GM12878 (cell line): ENCODE measurements at regions of chrX and their contacts with region 1.

Region 1: DNA sequence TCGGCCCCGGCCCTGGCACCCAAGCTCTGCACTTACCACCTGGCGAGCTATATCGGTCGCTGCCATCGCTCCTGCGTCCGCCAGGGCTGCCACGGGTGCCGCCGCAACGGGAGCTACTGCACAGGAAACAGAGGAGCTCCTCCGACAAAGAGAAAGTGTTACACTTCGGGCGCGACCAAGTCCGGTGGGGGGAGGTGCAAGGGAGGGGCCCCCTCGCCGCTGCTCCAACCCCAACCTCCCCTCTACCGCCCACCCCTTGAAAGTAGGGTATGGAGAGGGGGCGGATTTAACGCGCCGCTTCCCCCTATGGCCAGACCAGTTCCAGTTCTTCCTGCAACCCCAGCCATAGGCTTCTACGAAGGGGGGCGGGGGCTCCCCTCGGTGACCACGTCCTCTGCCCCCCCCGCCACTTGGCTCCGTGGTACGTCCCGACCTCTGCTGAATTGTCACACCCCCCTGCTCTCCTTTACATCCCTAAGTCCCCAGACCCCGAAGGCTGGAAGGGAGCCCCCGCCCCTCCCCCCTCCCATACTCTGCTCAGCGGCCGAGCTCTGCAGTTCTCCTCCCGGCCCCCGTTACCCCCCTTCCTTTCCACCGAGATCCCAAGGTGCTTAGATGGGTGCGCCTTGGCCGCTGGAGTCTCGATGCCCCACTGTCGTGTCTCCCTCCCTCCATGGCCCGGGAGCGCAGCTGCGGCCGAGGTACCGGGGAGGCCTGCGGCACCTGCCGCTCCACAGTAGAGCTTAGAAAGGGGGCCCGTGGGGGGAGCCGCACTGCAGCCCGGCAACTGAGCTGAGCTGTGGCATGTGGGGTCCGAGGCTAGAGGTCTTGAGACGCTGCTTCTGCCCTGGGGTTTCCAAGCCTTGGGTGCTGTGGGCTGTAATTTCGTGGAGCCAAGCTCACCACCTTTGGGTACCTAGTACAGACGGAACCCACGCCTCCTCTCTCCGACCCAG is at the start of gene SEPTIN6:
- DNase-seq: no peak
- ATAC-seq: peak; percentile 71
- H3K4me3 ChIP-seq: peak within 1 kb of the TSS; percentile 82
- H3K27ac ChIP-seq: peak within 1 kb of the TSS; percentile 83
- H3K4me1 ChIP-seq: peaks cover 24% of the 10 kb centered on the region
- H3K27me3 ChIP-seq: no peaks in the 10 kb centered on the region
- CTCF ChIP-seq: no peak
- EP300 ChIP-seq: no peak
- POLR2A ChIP-seq: peak; percentile 98
- RAD21 ChIP-seq: no peak
- polyA plus RNA-seq, gene SEPTIN6: 37.2 to 48.4 TPM

Region 2: DNA sequence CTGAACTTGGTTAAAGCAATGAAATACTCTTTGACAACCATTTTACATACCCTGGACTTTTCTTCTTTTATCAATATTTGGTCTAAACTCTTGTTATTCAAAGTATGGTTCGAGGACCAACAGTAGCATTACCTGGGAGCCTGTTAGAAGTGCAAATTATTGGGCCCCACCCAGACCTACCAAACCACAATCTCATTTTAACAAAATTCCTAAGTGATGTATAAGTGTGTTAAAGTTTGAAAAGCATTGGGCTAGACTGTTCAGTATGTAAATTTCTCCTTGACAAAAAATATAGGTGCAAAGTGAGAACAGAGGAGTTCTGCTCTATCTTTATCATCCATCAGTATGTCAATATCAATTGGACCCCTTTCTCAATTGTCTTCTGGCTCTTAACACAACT is 390.2 kb before region 1 on chrX:
- CTCF ChIA-PET with region 1: no interaction called
- POLR2A ChIA-PET with region 1: no interaction called
- RAD21 ChIA-PET with region 1: no interaction called
- SMC1A ChIA-PET with region 1: no interaction called
- in situ Hi-C with region 1: no loop called
- intact Hi-C with region 1: no loop called
- DNase-seq: no peak
- ATAC-seq: no peak
- H3K4me3 ChIP-seq: no peak overlapping the region
- H3K27ac ChIP-seq: no peak overlapping the region
- H3K4me1 ChIP-seq: no peaks in the 10 kb centered on the region
- H3K27me3 ChIP-seq: no peaks in the 10 kb centered on the region
- CTCF ChIP-seq: no peak
- EP300 ChIP-seq: no peak
- POLR2A ChIP-seq: no peak
- RAD21 ChIP-seq: no peak

Region 3: DNA sequence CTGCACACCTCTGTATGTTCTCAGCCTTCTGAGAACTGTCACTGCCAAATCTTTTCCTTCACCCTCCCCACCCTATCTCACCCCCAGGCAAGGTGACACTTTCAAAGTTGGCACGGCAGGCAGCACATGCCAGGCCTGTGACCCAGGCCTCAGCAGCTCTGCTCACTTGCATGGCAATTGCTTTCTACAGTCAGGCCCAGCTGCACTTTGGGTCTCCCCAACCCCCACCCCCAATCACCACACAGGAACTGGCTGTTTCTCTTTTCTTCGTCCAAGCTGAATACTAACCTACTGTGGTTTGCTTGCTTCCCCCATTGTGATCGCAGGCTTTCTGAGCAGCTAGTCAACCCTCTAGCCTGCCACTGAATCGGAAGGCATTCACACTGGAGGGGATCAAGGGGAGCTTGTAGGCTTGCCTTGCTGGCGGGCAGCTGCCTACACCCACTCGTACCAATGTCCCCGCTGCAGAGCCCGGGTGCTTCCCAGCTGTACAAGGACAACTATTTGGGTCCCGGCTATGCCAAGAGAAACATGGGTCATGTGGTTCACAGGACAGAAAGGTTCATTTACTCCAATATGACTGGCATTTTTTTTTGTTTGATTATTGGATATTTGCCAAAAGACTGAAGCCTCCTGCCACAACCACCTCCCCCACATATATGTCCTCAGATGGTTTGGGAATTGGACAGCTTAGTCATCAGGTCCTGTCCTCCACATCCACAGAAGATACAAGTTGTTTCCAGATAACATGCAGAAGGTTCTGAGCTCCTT is 266.1 kb before region 1 on chrX:
- CTCF ChIA-PET with region 1: no interaction called
- POLR2A ChIA-PET with region 1: no interaction called
- RAD21 ChIA-PET with region 1: no interaction called
- SMC1A ChIA-PET with region 1: no interaction called
- in situ Hi-C with region 1: no loop called
- intact Hi-C with region 1: no loop called
- DNase-seq: peak; percentile 28
- ATAC-seq: peak; percentile 73
- H3K4me3 ChIP-seq: no peak overlapping the region
- H3K27ac ChIP-seq: peak overlapping the region; percentile 70
- H3K4me1 ChIP-seq: peaks cover 13% of the 10 kb centered on the region
- H3K27me3 ChIP-seq: no peaks in the 10 kb centered on the region
- CTCF ChIP-seq: no peak
- EP300 ChIP-seq: no peak
- POLR2A ChIP-seq: no peak
- RAD21 ChIP-seq: no peak

Region 4: DNA sequence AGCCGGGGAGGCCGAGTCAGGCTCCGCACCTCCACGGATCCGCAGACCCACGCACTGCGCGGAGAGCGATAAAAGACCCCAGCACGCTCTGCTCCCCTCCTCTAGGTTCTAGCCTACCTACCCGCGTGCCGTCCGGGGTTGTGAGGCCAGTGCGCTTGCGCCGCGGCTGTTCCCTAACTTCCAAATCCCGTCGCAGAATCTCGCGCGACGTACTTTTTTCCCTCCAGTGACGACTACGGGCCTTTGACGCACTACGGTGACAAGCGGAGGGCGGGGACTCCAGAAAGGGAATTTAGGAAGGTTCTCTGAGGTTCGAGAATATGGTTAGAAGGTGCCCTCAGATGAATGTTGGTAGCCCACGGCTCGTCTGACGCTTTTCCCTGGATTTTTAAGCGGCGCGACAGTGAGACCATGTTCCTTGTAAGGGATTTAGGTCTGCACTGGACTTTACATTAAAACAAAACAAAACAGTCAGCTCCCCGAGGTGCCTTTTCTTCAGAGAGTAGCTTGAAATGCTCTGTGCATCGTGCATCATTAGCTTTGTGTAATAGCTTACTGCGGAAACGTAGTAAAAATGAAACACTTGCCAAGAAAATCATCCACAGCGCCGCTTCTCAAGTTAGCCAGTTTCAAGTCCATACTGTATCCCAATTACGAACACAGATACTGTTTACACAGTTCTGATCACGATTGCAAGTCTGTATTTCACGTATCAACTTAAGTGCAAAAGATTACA is 86.9 kb before region 1 on chrX and contains the start of gene NKRF:
- CTCF ChIA-PET with region 1: interaction called, 11 read pairs
- POLR2A ChIA-PET with region 1: interaction called, 8 read pairs
- RAD21 ChIA-PET with region 1: interaction called, 13 read pairs
- SMC1A ChIA-PET with region 1: interaction called, 7 read pairs
- in situ Hi-C with region 1: no loop called
- intact Hi-C with region 1: no loop called
- DNase-seq: peak; percentile 78
- ATAC-seq: peak; percentile 78
- H3K4me3 ChIP-seq: peak within 1 kb of the TSS; percentile 57
- H3K27ac ChIP-seq: peak within 1 kb of the TSS; percentile 85
- H3K4me1 ChIP-seq: no peaks in the 10 kb centered on the region; the same call in 1 of the 2 replicates
- H3K27me3 ChIP-seq: no peaks in the 10 kb centered on the region
- CTCF ChIP-seq: no peak
- EP300 ChIP-seq: no peak
- POLR2A ChIP-seq: peak; percentile 93
- RAD21 ChIP-seq: no peak
- polyA plus RNA-seq, gene NKRF: 6.2 to 9.5 TPM

Region 5: GRCh38 chrX:119647552-119648420 is 45.5 kb before region 1 on chrX:
- CTCF ChIA-PET with region 1: interaction called, 7 read pairs
- POLR2A ChIA-PET with region 1: interaction called, 4 read pairs
- RAD21 ChIA-PET with region 1: interaction called, 9 read pairs
- SMC1A ChIA-PET with region 1: interaction called, 10 read pairs
- in situ Hi-C with region 1: no loop called
- intact Hi-C with region 1: no loop called
- DNase-seq: peak; percentile 98
- ATAC-seq: peak; percentile 95
- H3K4me3 ChIP-seq: 0 out of 2 replicates have a peak overlapping the region, but pooled peaks have one; percentile 11
- H3K27ac ChIP-seq: peak overlapping the region; percentile 89
- H3K4me1 ChIP-seq: peaks cover 47% of the 10 kb centered on the region
- H3K27me3 ChIP-seq: no peaks in the 10 kb centered on the region
- CTCF ChIP-seq: no peak
- EP300 ChIP-seq: peak; percentile 94 to 97
- POLR2A ChIP-seq: peak; percentile 53
- RAD21 ChIP-seq: no peak

Region 6: GRCh38 chrX:119676949-119677653 is 16.2 kb before region 1 on chrX:
- CTCF ChIA-PET with region 1: interaction called, 9 read pairs
- POLR2A ChIA-PET with region 1: interaction called, 27 read pairs
- RAD21 ChIA-PET with region 1: interaction called, 7 read pairs
- SMC1A ChIA-PET with region 1: interaction called, 39 read pairs
- in situ Hi-C with region 1: no loop called
- intact Hi-C with region 1: no loop called
- DNase-seq: no peak
- ATAC-seq: no peak
- H3K4me3 ChIP-seq: no peak overlapping the region
- H3K27ac ChIP-seq: peak overlapping the region; percentile 71
- H3K4me1 ChIP-seq: peaks cover 35% of the 10 kb centered on the region
- H3K27me3 ChIP-seq: no peaks in the 10 kb centered on the region
- CTCF ChIP-seq: no peak
- EP300 ChIP-seq: no peak
- POLR2A ChIP-seq: no peak
- RAD21 ChIP-seq: no peak

Region 7: DNA sequence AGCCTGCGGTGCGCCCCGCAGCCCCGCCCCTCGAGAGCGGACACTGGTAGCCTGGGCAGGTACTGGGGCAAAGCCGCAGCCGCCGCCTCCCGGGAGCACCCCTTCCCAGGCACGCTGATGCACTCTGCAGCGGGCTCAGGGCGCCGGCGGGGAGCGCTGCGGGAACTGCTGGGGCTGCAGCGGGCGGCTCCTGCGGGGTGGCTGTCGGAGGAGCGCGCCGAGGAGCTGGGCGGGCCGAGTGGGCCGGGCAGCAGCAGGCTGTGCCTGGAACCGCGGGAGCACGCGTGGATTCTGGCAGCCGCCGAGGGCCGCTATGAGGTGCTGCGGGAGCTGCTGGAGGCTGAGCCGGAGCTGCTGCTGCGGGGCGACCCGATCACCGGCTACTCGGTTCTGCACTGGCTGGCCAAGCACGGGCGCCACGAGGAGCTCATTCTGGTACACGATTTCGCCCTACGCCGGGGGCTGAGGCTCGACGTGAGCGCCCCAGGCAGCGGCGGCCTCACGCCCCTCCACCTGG is 65.5 kb after region 1 on chrX:
- CTCF ChIA-PET with region 1: interaction called, 5 read pairs
- POLR2A ChIA-PET with region 1: interaction called, 42 read pairs
- RAD21 ChIA-PET with region 1: interaction called, 6 read pairs
- SMC1A ChIA-PET with region 1: interaction called, 5 read pairs
- in situ Hi-C with region 1: no loop called
- intact Hi-C with region 1: no loop called
- DNase-seq: no peak
- ATAC-seq: peak; percentile 9
- H3K4me3 ChIP-seq: peak overlapping the region; percentile 64
- H3K27ac ChIP-seq: no peak overlapping the region
- H3K4me1 ChIP-seq: peaks cover 44% of the 10 kb centered on the region
- H3K27me3 ChIP-seq: no peaks in the 10 kb centered on the region
- CTCF ChIP-seq: no peak
- EP300 ChIP-seq: no peak
- POLR2A ChIP-seq: no peak
- RAD21 ChIP-seq: no peak

Region 8: DNA sequence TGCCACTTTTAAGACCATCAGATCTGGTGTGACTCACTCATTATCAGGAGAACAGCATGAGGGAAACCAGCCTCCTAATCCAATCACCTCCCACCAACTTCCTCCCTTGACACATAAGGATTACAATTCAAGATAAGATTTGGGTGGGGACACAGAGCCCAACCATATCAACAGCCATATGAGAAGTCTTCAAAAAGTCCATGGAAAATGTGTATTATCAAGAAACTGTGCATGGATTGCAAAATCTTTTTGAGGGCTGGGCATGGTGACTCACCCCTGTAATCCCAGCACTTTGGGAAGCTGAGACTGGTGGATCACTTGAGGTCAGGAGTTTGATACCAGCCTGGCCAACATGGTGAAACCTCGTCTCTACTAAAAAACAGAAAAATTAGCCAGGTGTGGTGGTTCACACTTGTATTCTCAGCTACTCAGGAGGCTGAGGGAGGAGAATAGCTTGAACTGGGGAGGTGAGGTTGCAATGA is 115.9 kb after region 1 on chrX:
- CTCF ChIA-PET with region 1: no interaction called
- POLR2A ChIA-PET with region 1: no interaction called
- RAD21 ChIA-PET with region 1: no interaction called
- SMC1A ChIA-PET with region 1: no interaction called
- in situ Hi-C with region 1: no loop called
- intact Hi-C with region 1: no loop called
- DNase-seq: no peak
- ATAC-seq: no peak
- H3K4me3 ChIP-seq: no peak overlapping the region
- H3K27ac ChIP-seq: no peak overlapping the region
- H3K4me1 ChIP-seq: no peaks in the 10 kb centered on the region
- H3K27me3 ChIP-seq: no peaks in the 10 kb centered on the region
- CTCF ChIP-seq: no peak
- EP300 ChIP-seq: no peak
- POLR2A ChIP-seq: no peak
- RAD21 ChIP-seq: no peak

Region 9: DNA sequence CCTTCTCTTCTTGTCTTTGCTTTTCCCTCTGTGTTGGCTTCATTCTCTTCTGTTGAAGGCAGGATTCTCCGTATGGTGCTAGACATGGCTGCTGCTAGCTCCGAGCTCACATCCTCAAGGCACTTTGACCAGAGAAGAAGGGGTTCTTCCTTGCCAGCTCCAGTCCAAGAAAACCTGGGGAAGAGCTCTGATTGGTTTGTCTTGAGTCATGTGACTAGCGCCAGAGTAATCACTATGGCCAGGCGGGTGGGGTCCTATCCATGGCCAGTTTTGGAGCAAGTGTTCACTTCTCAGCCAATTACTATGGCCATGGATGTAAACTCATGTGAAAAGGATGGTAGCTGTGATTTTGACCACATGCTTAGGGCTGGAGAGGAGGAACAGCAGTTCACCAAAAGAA is 1108.1 kb after region 1 on chrX:
- CTCF ChIA-PET with region 1: no interaction called
- POLR2A ChIA-PET with region 1: no interaction called
- RAD21 ChIA-PET with region 1: no interaction called
- SMC1A ChIA-PET with region 1: no interaction called
- in situ Hi-C with region 1: no loop called
- intact Hi-C with region 1: no loop called
- DNase-seq: no peak
- ATAC-seq: no peak
- H3K4me3 ChIP-seq: no peak overlapping the region
- H3K27ac ChIP-seq: no peak overlapping the region
- H3K4me1 ChIP-seq: no peaks in the 10 kb centered on the region
- H3K27me3 ChIP-seq: no peaks in the 10 kb centered on the region
- CTCF ChIP-seq: no peak
- EP300 ChIP-seq: no peak
- POLR2A ChIP-seq: no peak
- RAD21 ChIP-seq: no peak